Left ventricle myocardium inferior (tissue), 1 donor: ENCODE measurements at regions of chr11 and their contacts with region 1.

Region 1: GRCh38 chr11:727859-728748 is 19.2 kb upstream of the TALDO1 start:
- DNase-seq: peak; percentile 78
- H3K4me3 ChIP-seq: no peak overlapping the region
- H3K27ac ChIP-seq: peak overlapping the region; percentile 27
- H3K4me1 ChIP-seq: peaks cover 26% of the 10 kb centered on the region
- H3K27me3 ChIP-seq: peaks cover 77% of the 10 kb centered on the region
- CTCF ChIP-seq: peak; percentile 95

Region 2: GRCh38 chr11:662689-663274 is 65.3 kb before region 1 on chr11:
- intact Hi-C with region 1: loop called (anchors 10 kb)
- DNase-seq: peak; percentile 59
- H3K4me3 ChIP-seq: no peak overlapping the region
- H3K27ac ChIP-seq: no peak overlapping the region
- H3K4me1 ChIP-seq: peaks cover 24% of the 10 kb centered on the region
- H3K27me3 ChIP-seq: no peaks in the 10 kb centered on the region
- CTCF ChIP-seq: peak; percentile 77

Region 3: DNA sequence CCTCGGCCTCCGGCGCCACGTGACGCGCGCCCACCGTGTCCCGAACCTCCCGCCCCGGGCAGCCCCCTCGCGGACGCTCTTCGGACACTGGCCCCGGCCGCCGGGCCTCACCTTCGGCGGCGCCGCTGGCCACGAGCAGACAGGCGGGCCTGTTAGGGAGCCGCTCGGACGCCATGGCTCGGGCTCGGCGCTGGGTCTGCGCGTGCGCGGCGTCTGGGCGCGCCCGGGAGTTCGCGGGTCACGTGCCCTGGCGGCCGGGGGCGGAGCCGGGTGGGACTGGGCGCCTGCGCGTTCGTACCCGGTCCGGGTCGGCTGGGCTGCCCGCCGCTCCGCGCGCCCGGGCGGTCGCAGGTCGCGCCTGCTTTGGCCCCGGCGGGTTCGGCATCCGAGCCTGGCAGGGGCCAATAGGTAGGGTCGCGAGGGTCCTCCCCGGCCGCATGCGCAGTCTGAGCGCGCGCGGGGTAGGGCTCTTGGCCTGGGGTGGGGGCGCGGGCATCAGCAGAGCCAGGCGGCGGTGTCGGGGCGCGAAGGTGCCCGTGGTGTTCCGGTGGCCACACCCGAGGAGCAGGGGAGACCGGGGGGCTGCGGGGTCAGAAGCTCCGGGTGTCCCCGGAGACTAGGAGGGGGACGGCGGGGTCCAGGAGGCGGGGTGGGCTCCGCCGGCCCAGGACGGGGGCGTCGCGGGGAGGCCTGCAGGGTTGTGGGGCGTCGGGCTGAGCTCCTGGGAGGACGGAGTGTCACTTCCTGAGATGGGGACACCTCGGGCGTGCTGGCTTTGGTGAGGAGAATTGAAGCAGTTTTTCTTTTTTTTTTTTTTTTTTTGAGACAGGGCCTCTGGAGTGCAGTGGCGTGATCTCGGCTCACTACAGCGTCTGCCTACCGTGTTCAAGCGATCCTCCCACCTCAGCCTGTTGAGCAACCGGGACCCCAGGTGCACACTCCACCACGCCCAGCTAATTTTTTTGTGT is 49.5 kb after region 1 on chr11 and contains the start of gene GATD1:
- intact Hi-C with region 1: no loop called
- DNase-seq: peak; percentile 93
- H3K4me3 ChIP-seq: peak within 1 kb of the TSS; percentile 94
- H3K27ac ChIP-seq: peak within 1 kb of the TSS; percentile 87
- H3K4me1 ChIP-seq: peaks cover 54% of the 10 kb centered on the region
- H3K27me3 ChIP-seq: no peaks in the 10 kb centered on the region
- CTCF ChIP-seq: no peak
- total RNA-seq, gene GATD1: 26.2 TPM